OCI-LY7 (cell line): ENCODE measurements at regions of chr14 and their contacts with region 1.

Region 1: GRCh38 chr14:65302571-65303189 is 109.8 kb upstream of the FUT8 start:
- DNase-seq: peak; percentile 82
- H3K4me3 ChIP-seq: peak overlapping the region; percentile 61
- H3K27ac ChIP-seq: peak overlapping the region; percentile 99
- H3K4me1 ChIP-seq: peaks cover 98% of the 10 kb centered on the region
- CTCF ChIP-seq: no peak

Region 2: GRCh38 chr14:65229751-65230749 is 72.6 kb before region 1 on chr14:
- CTCF ChIA-PET with region 1: no interaction called
- POLR2A ChIA-PET with region 1: interaction called, 4 read pairs
- intact Hi-C with region 1: loop called (anchors 5 kb)
- DNase-seq: peak; percentile 30
- H3K4me3 ChIP-seq: peak overlapping the region; percentile 52
- H3K27ac ChIP-seq: no peak overlapping the region
- H3K4me1 ChIP-seq: peaks cover 60% of the 10 kb centered on the region
- CTCF ChIP-seq: no peak

Region 3: GRCh38 chr14:65287264-65288131 is 15.2 kb before region 1 on chr14:
- CTCF ChIA-PET with region 1: interaction called, 6 read pairs
- POLR2A ChIA-PET with region 1: interaction called, 160 read pairs
- intact Hi-C with region 1: loop called (anchors 1 kb)
- DNase-seq: peak; percentile 91
- H3K4me3 ChIP-seq: peak overlapping the region; percentile 45
- H3K27ac ChIP-seq: peak overlapping the region; percentile 90
- H3K4me1 ChIP-seq: peaks cover 93% of the 10 kb centered on the region
- CTCF ChIP-seq: 0 out of 2 replicates have a peak, but pooled peaks have one; percentile 27

Region 4: GRCh38 chr14:65336191-65336591 is 33.5 kb after region 1 on chr14:
- CTCF ChIA-PET with region 1: interaction called, 4 read pairs
- POLR2A ChIA-PET with region 1: interaction called, 19 read pairs
- intact Hi-C with region 1: no loop called
- DNase-seq: no peak
- H3K4me3 ChIP-seq: no peak overlapping the region
- H3K27ac ChIP-seq: no peak overlapping the region
- H3K4me1 ChIP-seq: peaks cover 61% of the 10 kb centered on the region
- CTCF ChIP-seq: no peak

Region 5: GRCh38 chr14:65361920-65362319 is 59.2 kb after region 1 on chr14:
- CTCF ChIA-PET with region 1: interaction called, 6 read pairs
- POLR2A ChIA-PET with region 1: interaction called, 20 read pairs
- intact Hi-C with region 1: no loop called
- DNase-seq: no peak
- H3K4me3 ChIP-seq: no peak overlapping the region
- H3K27ac ChIP-seq: no peak overlapping the region
- H3K4me1 ChIP-seq: peaks cover 54% of the 10 kb centered on the region
- CTCF ChIP-seq: no peak